Naive thymus-derived CD4-positive, alpha-beta T cell (primary cell): ENCODE measurements at regions of chrX and their contacts with region 1.

Region 1: GRCh38 chrX:133776072-133776471 is 209.3 kb downstream of the GPC3 start:
- DNase-seq: peak in 8 of 9 donors; percentile 14 to 60 (median 47)
- ATAC-seq: peak; percentile 55
- H3K4me3 ChIP-seq: no peak overlapping the region
- H3K4me3 Mint-ChIP-seq: no peak overlapping the region
- H3K27ac ChIP-seq: no peak overlapping the region
- H3K27ac Mint-ChIP-seq: peak overlapping the region in 1 of 9 donors; percentile 25
- H3K4me1 ChIP-seq: no peaks in the 10 kb centered on the region
- H3K4me1 Mint-ChIP-seq: peaks cover 0 to 5% (median 0%) of the 10 kb centered on the region in 7 donors
- H3K27me3 ChIP-seq: no peaks in the 10 kb centered on the region
- H3K27me3 Mint-ChIP-seq: no peaks in the 10 kb centered on the region

Region 2: DNA sequence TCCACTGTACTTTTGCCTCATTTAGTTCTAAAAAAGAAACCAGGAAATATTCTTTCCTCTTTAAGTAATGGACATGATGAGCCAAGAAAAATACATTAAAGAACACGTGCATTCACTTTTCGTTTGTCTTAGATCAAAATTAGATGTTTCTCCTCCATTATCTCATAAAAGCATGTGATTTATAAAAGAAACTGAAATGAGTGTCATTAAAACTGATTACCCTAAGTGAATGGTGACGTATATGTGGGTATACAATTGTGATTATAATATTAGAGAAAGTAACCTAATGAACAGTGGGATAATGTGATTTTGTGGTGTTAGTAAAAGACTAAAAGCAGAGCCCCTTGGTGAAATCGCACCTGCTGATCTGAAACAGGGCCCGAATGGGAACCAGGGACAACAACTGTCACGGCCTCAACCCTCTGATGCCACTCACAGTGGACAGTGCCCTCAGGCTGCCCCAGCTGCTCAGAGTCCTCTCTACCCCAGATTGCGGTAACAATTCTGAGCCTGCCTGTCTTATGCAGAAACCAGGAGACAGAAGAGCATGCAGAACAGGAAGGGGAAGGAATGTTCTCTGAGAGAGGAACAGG is 791.9 kb before region 1 on chrX:
- CTCF ChIA-PET with region 1: no interaction called
- POLR2A ChIA-PET with region 1: no interaction called
- intact Hi-C with region 1: loop called in 1 of 2 experiments (anchors 5 kb)
- DNase-seq: no peak
- ATAC-seq: no peak
- H3K4me3 ChIP-seq: no peak overlapping the region
- H3K4me3 Mint-ChIP-seq: no peak overlapping the region
- H3K27ac ChIP-seq: no peak overlapping the region
- H3K27ac Mint-ChIP-seq: no peak overlapping the region
- H3K4me1 ChIP-seq: no peaks in the 10 kb centered on the region
- H3K4me1 Mint-ChIP-seq: no peaks in the 10 kb centered on the region
- H3K27me3 ChIP-seq: no peaks in the 10 kb centered on the region
- H3K27me3 Mint-ChIP-seq: peaks cover 0 to 7% (median 7%) of the 10 kb centered on the region in 5 donors

Region 3: DNA sequence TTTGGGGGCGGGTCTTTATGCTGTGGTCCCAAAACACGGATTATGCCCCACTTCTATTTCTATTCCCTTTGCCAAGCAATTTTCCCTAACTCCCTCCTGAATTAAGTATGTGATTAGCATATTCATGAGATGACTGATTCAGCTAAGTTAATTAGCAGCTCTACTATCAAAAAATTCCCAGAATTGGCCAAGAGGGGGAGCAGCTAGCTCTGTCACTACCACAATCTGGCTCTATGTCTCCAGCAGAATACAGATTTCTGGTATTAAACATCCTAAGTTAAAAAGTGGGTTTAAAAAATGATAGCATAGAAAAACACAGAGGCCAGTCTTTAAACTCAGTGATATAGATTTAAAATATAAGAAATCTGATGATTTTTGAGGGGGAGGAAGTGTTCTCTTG is 441.0 kb before region 1 on chrX:
- CTCF ChIA-PET with region 1: no interaction called
- POLR2A ChIA-PET with region 1: no interaction called
- intact Hi-C with region 1: loop called in 1 of 2 experiments (anchors 10 kb)
- DNase-seq: peak in 3 of 9 donors; percentile 1 to 8 (median 5)
- ATAC-seq: no peak
- H3K4me3 ChIP-seq: no peak overlapping the region
- H3K4me3 Mint-ChIP-seq: no peak overlapping the region
- H3K27ac ChIP-seq: no peak overlapping the region
- H3K27ac Mint-ChIP-seq: peak overlapping the region in 1 of 9 donors; percentile 10
- H3K4me1 ChIP-seq: no peaks in the 10 kb centered on the region
- H3K4me1 Mint-ChIP-seq: no peaks in the 10 kb centered on the region
- H3K27me3 ChIP-seq: no peaks in the 10 kb centered on the region
- H3K27me3 Mint-ChIP-seq: no peaks in the 10 kb centered on the region

Region 4: DNA sequence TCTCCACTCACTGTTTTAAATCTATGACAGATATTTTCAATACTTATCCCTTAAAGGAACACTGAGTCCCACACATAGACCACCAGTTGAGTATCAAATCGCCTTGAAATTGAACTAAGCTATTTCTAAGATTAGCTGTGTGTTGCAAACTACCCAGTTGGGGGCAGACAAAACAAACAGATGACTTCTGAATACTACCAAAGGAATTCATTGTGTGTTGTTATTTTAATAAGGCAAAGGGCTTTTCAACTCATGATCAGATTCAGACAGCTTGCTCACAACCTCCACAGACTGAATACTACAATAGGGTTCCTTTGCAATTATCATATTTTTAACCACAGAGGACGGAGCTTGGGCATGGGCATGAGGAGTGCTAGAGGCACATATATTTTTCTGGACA is 77.8 kb before region 1 on chrX:
- CTCF ChIA-PET with region 1: interaction called, 6 read pairs
- POLR2A ChIA-PET with region 1: no interaction called
- intact Hi-C with region 1: loop called in 1 of 2 experiments (anchors 1 kb)
- DNase-seq: peak in 4 of 9 donors; percentile 1 to 29 (median 19)
- ATAC-seq: no peak
- H3K4me3 ChIP-seq: no peak overlapping the region
- H3K4me3 Mint-ChIP-seq: no peak overlapping the region
- H3K27ac ChIP-seq: no peak overlapping the region
- H3K27ac Mint-ChIP-seq: peak overlapping the region in 2 of 9 donors; percentile 36 to 40
- H3K4me1 ChIP-seq: no peaks in the 10 kb centered on the region
- H3K4me1 Mint-ChIP-seq: no peaks in the 10 kb centered on the region
- H3K27me3 ChIP-seq: no peaks in the 10 kb centered on the region
- H3K27me3 Mint-ChIP-seq: no peaks in the 10 kb centered on the region

Region 5: DNA sequence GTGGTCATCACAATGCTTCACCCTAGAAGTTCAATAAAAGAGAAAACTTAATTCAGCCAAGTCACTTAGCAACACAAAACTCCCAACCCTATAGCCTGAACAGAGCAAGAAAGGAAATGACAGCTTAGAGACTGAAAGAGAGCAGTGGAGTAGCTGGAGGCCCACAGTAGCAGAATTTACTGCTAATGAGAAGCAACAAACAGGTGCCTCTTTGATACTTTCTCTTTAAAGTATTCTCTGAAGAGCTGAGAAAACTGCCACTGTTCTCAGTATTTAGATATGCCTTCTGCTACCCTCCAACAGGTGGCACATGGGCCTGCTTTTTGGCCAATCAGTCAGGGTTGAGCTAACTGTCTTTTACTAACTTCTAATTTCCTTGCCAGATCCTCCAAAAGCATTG is 30.7 kb before region 1 on chrX:
- CTCF ChIA-PET with region 1: interaction called, 17 read pairs
- POLR2A ChIA-PET with region 1: interaction called, 3 read pairs
- intact Hi-C with region 1: loop called in 1 of 2 experiments (anchors 1 kb)
- DNase-seq: peak in 7 of 9 donors; percentile 30 to 77 (median 59)
- ATAC-seq: peak; percentile 87
- H3K4me3 ChIP-seq: no peak overlapping the region
- H3K4me3 Mint-ChIP-seq: peak overlapping the region in 7 of 10 donors; percentile 7 to 57 (median 36)
- H3K27ac ChIP-seq: peak overlapping the region; percentile 14
- H3K27ac Mint-ChIP-seq: peak overlapping the region in 8 of 9 donors; percentile 71 to 94 (median 80)
- H3K4me1 ChIP-seq: peaks cover 0 to 49% of the 10 kb centered on the region in 2 donors
- H3K4me1 Mint-ChIP-seq: peaks cover 11 to 75% (median 65%) of the 10 kb centered on the region in 7 donors
- H3K27me3 ChIP-seq: no peaks in the 10 kb centered on the region
- H3K27me3 Mint-ChIP-seq: no peaks in the 10 kb centered on the region

Region 6: DNA sequence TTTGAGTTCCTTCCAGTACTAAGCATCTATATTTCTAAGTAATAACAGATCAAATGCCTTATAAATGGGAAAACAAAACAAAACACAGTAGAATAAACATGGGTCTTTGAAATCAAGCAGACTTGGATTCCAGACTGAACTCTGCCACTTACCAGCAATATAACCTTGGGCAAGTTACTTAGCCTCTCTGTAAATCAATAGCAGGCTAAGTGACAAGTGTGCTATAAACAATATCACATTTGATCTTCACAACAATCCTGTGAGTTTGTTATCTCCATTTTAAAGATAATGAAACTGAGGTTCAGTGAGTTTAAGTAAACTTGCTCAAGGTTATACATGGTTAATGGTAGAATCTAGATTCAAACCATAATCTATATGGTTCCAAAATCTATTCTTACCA is 43.5 kb after region 1 on chrX:
- CTCF ChIA-PET with region 1: no interaction called
- POLR2A ChIA-PET with region 1: no interaction called
- intact Hi-C with region 1: no loop called
- DNase-seq: no peak
- ATAC-seq: no peak
- H3K4me3 ChIP-seq: no peak overlapping the region
- H3K4me3 Mint-ChIP-seq: no peak overlapping the region
- H3K27ac ChIP-seq: no peak overlapping the region
- H3K27ac Mint-ChIP-seq: no peak overlapping the region
- H3K4me1 ChIP-seq: no peaks in the 10 kb centered on the region
- H3K4me1 Mint-ChIP-seq: no peaks in the 10 kb centered on the region
- H3K27me3 ChIP-seq: no peaks in the 10 kb centered on the region
- H3K27me3 Mint-ChIP-seq: peaks cover 0 to 2% (median 0%) of the 10 kb centered on the region in 5 donors